T-cell (primary cell): ENCODE measurements at regions of chr6 and their contacts with region 1.

Region 1: GRCh38 chr6:130115036-130115435 is 96.7 kb downstream of the L3MBTL3 start:
- DNase-seq: no peak
- ATAC-seq: no peak
- H3K4me3 ChIP-seq: no peak overlapping the region
- H3K4me3 Mint-ChIP-seq: no peak overlapping the region
- H3K27ac ChIP-seq: no peak overlapping the region
- H3K27ac Mint-ChIP-seq: peak overlapping the region in 1 of 2 donors; percentile 63
- H3K4me1 ChIP-seq: no peaks in the 10 kb centered on the region
- H3K4me1 Mint-ChIP-seq: peaks cover 15 to 34% (median 21%) of the 10 kb centered on the region in 3 donors
- H3K27me3 ChIP-seq: no peaks in the 10 kb centered on the region
- H3K27me3 Mint-ChIP-seq: no peaks in the 10 kb centered on the region

Region 2: DNA sequence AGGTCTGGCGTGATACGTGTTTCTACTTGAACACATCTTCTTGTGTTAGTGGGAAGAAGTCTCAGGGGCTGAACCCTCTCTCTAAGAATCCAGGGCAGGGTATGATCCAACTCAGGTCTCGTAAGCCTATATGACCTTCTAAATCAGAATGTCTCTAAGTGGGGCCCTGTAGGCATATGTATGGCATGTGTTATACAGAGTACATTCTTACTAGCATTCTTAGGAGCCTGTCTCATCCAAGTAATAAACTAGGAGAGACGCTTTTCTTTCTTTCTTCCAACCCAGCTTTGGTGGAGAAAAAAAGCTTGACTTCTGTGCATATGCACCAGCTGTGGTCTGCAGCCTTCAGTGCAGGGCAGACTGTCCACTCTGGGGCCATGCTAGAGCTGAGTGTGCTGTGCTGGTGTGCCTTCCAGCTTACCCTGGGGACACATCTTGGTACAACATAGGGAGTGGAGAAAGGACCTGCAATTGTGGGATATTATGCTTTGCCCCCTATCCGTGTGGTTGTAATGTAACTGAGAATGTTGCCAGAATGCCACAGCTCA is 49.4 kb before region 1 on chr6:
- CTCF ChIA-PET with region 1: no interaction called
- POLR2A ChIA-PET with region 1: interaction called in 1 of 2 experiments, 12 read pairs
- DNase-seq: no peak
- ATAC-seq: no peak
- H3K4me3 ChIP-seq: no peak overlapping the region
- H3K4me3 Mint-ChIP-seq: no peak overlapping the region
- H3K27ac ChIP-seq: no peak overlapping the region
- H3K27ac Mint-ChIP-seq: no peak overlapping the region
- H3K4me1 ChIP-seq: no peaks in the 10 kb centered on the region
- H3K4me1 Mint-ChIP-seq: peaks cover 8 to 11% (median 9%) of the 10 kb centered on the region in 3 donors
- H3K27me3 ChIP-seq: no peaks in the 10 kb centered on the region
- H3K27me3 Mint-ChIP-seq: no peaks in the 10 kb centered on the region

Region 3: DNA sequence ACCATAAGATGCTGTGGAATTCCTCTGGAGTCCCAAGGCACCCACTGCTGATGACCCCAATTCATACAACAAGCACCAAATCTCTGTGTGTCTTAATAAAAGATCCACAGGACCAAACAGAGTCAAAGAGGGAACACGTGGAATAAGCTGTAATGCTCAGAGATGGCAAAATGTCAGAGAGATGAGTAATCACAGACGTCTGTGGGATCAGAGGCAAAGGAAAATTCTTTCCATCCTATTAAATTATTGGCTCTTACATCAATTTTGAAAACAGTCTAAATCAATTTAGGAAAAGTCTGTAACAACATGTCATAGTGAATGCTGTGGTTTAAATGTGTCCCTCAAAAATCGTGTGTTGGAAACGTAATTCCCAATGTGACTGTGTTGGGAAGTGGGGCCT is 125.2 kb after region 1 on chr6:
- CTCF ChIA-PET with region 1: no interaction called
- POLR2A ChIA-PET with region 1: interaction called in 1 of 2 experiments, 10 read pairs
- DNase-seq: no peak
- ATAC-seq: no peak
- H3K4me3 ChIP-seq: no peak overlapping the region
- H3K4me3 Mint-ChIP-seq: no peak overlapping the region
- H3K27ac ChIP-seq: no peak overlapping the region
- H3K27ac Mint-ChIP-seq: no peak overlapping the region
- H3K4me1 ChIP-seq: no peaks in the 10 kb centered on the region
- H3K4me1 Mint-ChIP-seq: peaks cover 0 to 7% (median 0%) of the 10 kb centered on the region in 3 donors
- H3K27me3 ChIP-seq: no peaks in the 10 kb centered on the region
- H3K27me3 Mint-ChIP-seq: no peaks in the 10 kb centered on the region